ENCODE measurements at regions of chr7 and their contacts with region 1.

Region 1: GRCh38 chr7:99693427-99694200 is 13.8 kb upstream of the CYP3A5 start:
- DNase-seq: peak; percentile 80 to 91
- H3K4me3 ChIP-seq: peak overlapping the region; percentile 24; the same call in 1 of the 2 replicates
- H3K4me3 Mint-ChIP-seq: peak overlapping the region; percentile 59
- H3K27ac Mint-ChIP-seq: peak overlapping the region; percentile 87
- H3K4me1 ChIP-seq: peaks cover 38% of the 10 kb centered on the region
- H3K4me1 Mint-ChIP-seq: peaks cover 33% of the 10 kb centered on the region
- H3K27me3 ChIP-seq: no peaks in the 10 kb centered on the region
- H3K27me3 Mint-ChIP-seq: no peaks in the 10 kb centered on the region
- CTCF ChIP-seq: no peak

Region 2: DNA sequence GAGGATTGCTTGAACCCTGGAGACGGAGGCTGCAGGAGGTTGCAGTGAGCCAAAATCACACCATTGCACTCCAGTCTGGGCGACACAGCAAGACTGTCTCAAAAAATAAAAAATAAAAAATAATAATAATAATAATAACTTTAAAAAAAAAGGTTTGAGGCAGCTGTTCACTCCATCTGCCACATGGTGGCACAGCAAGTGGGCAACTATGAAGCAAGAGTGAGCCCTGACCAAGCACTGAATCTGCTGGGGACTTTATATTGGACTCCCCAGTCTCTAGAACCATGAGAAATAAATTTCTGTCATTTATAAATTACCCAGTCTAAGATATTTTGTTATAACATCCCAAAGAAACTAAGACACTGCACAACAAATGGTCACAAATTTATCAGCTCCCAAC is 1426.8 kb before region 1 on chr7:
- CTCF ChIA-PET with region 1: no interaction called
- POLR2A ChIA-PET with region 1: no interaction called
- intact Hi-C with region 1: no loop called
- DNase-seq: no peak
- H3K4me3 ChIP-seq: no peak overlapping the region
- H3K4me3 Mint-ChIP-seq: no peak overlapping the region
- H3K27ac Mint-ChIP-seq: no peak overlapping the region
- H3K4me1 ChIP-seq: peaks cover 17% of the 10 kb centered on the region
- H3K4me1 Mint-ChIP-seq: peaks cover 15% of the 10 kb centered on the region
- H3K27me3 ChIP-seq: no peaks in the 10 kb centered on the region
- H3K27me3 Mint-ChIP-seq: no peaks in the 10 kb centered on the region
- CTCF ChIP-seq: peak; percentile 37 to 52

Region 3: DNA sequence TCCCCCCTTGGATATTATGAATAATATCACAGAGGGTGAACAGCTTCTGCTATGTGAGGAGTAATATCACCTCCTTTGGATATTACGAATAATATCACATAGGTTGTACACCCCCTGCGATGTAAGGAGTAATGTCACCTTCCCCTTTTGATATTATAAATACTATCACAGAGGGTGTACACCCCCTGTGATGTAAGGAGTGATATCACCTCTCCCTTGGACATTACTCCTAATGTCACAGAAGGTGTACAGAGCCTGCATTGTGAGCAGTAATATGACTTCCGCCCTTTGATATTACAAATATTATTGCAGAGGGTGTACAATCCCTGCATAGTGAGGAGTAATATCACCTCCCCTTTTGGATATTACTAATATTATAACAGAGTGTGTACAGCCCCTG is 104.7 kb before region 1 on chr7:
- CTCF ChIA-PET with region 1: no interaction called
- POLR2A ChIA-PET with region 1: no interaction called
- intact Hi-C with region 1: no loop called
- DNase-seq: no peak
- H3K4me3 ChIP-seq: no peak overlapping the region
- H3K4me3 Mint-ChIP-seq: no peak overlapping the region
- H3K27ac Mint-ChIP-seq: no peak overlapping the region
- H3K4me1 ChIP-seq: no peaks in the 10 kb centered on the region
- H3K4me1 Mint-ChIP-seq: no peaks in the 10 kb centered on the region
- H3K27me3 ChIP-seq: no peaks in the 10 kb centered on the region
- H3K27me3 Mint-ChIP-seq: peaks cover 3% of the 10 kb centered on the region
- CTCF ChIP-seq: no peak

Region 4: DNA sequence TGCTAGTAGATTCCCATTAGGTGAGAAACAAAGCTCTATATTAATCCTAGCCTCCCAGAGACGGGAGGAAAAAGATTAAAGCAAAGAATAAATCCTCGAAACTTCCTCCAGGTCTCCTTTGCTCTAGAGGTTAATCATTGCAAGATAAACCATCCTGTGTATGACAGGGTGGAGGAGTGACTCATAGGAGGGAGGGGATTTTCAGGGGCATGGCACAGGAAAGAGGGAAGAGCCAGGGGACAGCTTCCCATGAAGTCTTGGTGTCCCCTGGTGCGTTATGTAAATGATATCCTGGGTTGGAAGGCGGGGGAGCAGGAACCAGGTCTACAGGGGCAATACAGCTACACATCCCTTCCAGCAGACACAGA is 14.6 kb before region 1 on chr7:
- CTCF ChIA-PET with region 1: no interaction called
- POLR2A ChIA-PET with region 1: no interaction called
- intact Hi-C with region 1: loop called (anchors 2 kb)
- DNase-seq: peak; percentile 54 to 68
- H3K4me3 ChIP-seq: peak overlapping the region; percentile 3; the same call in 1 of the 2 replicates
- H3K4me3 Mint-ChIP-seq: peak overlapping the region; percentile 34
- H3K27ac Mint-ChIP-seq: peak overlapping the region; percentile 70
- H3K4me1 ChIP-seq: peaks cover 28% of the 10 kb centered on the region
- H3K4me1 Mint-ChIP-seq: peaks cover 18% of the 10 kb centered on the region
- H3K27me3 ChIP-seq: no peaks in the 10 kb centered on the region
- H3K27me3 Mint-ChIP-seq: no peaks in the 10 kb centered on the region
- CTCF ChIP-seq: no peak

Region 5: DNA sequence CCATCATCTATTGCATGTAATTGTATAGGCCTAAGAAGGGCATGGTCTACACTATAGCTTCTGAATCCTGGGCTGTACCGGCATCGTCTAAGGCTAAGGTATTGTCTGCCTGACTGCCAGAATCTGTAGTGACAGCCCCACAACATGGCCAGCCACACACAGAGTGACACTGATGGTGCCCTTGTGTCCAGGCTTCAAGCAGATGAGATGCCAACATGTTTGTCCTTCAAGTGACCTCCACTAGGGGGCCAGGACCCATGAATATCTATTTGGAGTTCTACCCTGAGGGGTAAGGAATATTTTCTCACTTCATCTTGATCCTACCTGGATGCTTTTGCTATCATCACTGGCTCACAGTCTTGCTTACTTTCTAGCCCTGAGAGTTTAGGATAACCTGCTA is 39.8 kb after region 1 on chr7:
- CTCF ChIA-PET with region 1: no interaction called
- POLR2A ChIA-PET with region 1: no interaction called
- intact Hi-C with region 1: loop called (anchors 5 kb)
- DNase-seq: peak in 1 of 2 experiments; percentile 38
- H3K4me3 ChIP-seq: no peak overlapping the region
- H3K4me3 Mint-ChIP-seq: no peak overlapping the region
- H3K27ac Mint-ChIP-seq: no peak overlapping the region
- H3K4me1 ChIP-seq: peaks cover 19% of the 10 kb centered on the region
- H3K4me1 Mint-ChIP-seq: no peaks in the 10 kb centered on the region
- H3K27me3 ChIP-seq: no peaks in the 10 kb centered on the region
- H3K27me3 Mint-ChIP-seq: peaks cover 4% of the 10 kb centered on the region
- CTCF ChIP-seq: peak; percentile 35 to 43

Region 6: GRCh38 chr7:99837649-99838361 is 144.2 kb after region 1 on chr7:
- CTCF ChIA-PET with region 1: no interaction called
- POLR2A ChIA-PET with region 1: no interaction called
- intact Hi-C with region 1: loop called (anchors 5 kb)
- DNase-seq: no peak
- H3K4me3 ChIP-seq: no peak overlapping the region
- H3K4me3 Mint-ChIP-seq: no peak overlapping the region
- H3K27ac Mint-ChIP-seq: no peak overlapping the region
- H3K4me1 ChIP-seq: peaks cover 8% of the 10 kb centered on the region
- H3K4me1 Mint-ChIP-seq: peaks cover 17% of the 10 kb centered on the region
- H3K27me3 ChIP-seq: no peaks in the 10 kb centered on the region
- H3K27me3 Mint-ChIP-seq: no peaks in the 10 kb centered on the region
- CTCF ChIP-seq: peak; percentile 36 to 44